Activated T-helper 1 cell treated with anti-CD3 and anti-CD28 coated beads, Interleukin-12 subunit alpha, Interleukin-12 subunit beta, Interleukin-2, Interleukin-4 antibody, amounts not matched to agents 30 ng/mL and 10 ng/mL and 1 ng/mL, durations not matched to agents 14 hours and 24 hours and 36 hours (primary cell): ENCODE measurements at regions of chr4 and their contacts with region 1.

Region 1: GRCh38 chr4:40559265-40559940 is 70.3 kb downstream of the RBM47 start:
- DNase-seq: no peak
- H3K4me3 Mint-ChIP-seq: no peak overlapping the region
- H3K27ac Mint-ChIP-seq: peak overlapping the region; percentile 45
- H3K4me1 Mint-ChIP-seq: peaks cover 24% of the 10 kb centered on the region
- H3K27me3 Mint-ChIP-seq: peaks cover 3% of the 10 kb centered on the region

Region 2: DNA sequence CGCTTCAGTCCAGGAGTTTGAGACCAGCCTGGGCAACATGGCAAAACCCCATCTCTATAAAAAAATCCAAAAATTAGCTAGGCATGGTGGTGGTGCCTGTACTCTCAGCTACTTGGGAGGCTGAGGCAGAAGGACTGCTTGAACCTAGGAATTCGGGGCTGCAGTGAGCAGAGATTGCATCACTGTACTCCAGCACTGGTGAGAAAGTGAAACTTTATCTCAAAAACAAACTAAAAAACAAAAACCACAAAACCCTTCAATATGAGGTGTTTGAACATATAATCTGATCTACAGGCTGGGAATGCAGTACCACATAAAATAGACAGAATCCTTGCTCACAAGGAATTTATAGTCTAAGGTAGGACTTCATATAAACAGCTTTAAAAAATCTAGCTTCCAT is 685.6 kb before region 1 on chr4:
- intact Hi-C with region 1: no loop called
- DNase-seq: no peak
- H3K4me3 Mint-ChIP-seq: peak overlapping the region; percentile 41
- H3K27ac Mint-ChIP-seq: no peak overlapping the region
- H3K4me1 Mint-ChIP-seq: peaks cover 31% of the 10 kb centered on the region
- H3K27me3 Mint-ChIP-seq: no peaks in the 10 kb centered on the region

Region 3: GRCh38 chr4:40576631-40577480 is 17.5 kb after region 1 on chr4:
- intact Hi-C with region 1: loop called (anchors 2 kb)
- DNase-seq: no peak
- H3K4me3 Mint-ChIP-seq: peak overlapping the region; percentile 35
- H3K27ac Mint-ChIP-seq: peak overlapping the region; percentile 74
- H3K4me1 Mint-ChIP-seq: peaks cover 57% of the 10 kb centered on the region
- H3K27me3 Mint-ChIP-seq: peaks cover 2% of the 10 kb centered on the region